ENCODE measurements at regions of chr6 and their contacts with region 1.

Region 1: GRCh38 chr6:73695619-73696421 is at the start of gene CD109:
- DNase-seq: peak; percentile 86
- ATAC-seq: peak; percentile 87
- H3K4me3 Mint-ChIP-seq: peak within 1 kb of the TSS; percentile 95
- H3K27ac Mint-ChIP-seq: peak within 1 kb of the TSS; percentile 98
- H3K4me1 Mint-ChIP-seq: peaks cover 41% of the 10 kb centered on the region
- H3K27me3 Mint-ChIP-seq: peaks cover 32% of the 10 kb centered on the region
- CTCF ChIP-seq: no peak
- total RNA-seq, gene CD109: 9.5 to 10.6 TPM

Region 2: DNA sequence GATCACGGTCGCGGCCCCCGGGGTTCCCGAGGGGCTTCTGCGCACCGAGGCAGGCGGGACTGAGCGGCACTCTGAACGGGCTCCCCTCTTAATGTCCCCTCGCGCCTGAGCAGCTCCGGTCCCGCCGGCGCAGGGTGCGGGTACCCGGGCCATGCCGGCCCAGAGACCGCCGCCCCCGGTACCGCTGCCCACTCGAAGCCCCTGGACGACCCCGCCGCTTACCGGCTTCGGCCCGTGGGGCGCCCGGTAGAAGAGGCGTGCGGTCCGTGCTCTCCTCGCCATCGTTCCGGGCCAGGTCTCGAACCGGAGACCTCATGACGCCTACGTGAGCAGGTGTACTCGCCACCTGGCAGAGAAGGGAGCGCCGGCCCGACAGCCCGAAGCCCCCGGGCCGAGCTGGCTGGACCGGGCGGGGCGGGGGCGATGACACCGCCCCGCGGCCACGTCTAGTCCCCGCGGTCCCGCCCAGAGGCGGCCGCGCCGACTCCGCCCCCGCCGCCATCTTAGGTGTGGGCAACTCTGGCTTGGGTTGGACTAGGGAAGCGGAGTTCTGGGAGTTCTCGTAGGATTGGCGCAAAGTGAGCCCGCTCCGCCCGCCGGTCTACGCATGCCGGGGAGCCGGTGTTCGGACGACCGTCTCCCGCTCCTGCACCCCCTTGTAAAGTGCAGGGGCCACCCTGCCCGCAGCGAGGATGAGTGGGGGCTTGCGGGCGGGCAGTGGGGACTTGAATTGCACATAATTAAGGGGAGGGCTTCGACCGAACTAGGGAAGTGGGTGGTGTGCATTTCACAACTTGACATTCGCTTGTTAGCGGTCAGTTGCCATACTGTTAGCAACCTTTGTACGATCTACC is 42.0 kb before region 1 on chr6 and contains the start of gene SLC17A5:
- CTCF ChIA-PET with region 1: interaction called, 4 read pairs
- POLR2A ChIA-PET with region 1: interaction called, 3 read pairs
- intact Hi-C with region 1: loop called (anchors 1 kb)
- DNase-seq: peak; percentile 92
- ATAC-seq: peak; percentile 89
- H3K4me3 Mint-ChIP-seq: peak within 1 kb of the TSS; percentile 87
- H3K27ac Mint-ChIP-seq: peak within 1 kb of the TSS; percentile 92
- H3K4me1 Mint-ChIP-seq: peaks cover 31% of the 10 kb centered on the region
- H3K27me3 Mint-ChIP-seq: no peaks in the 10 kb centered on the region
- CTCF ChIP-seq: no peak
- total RNA-seq, gene SLC17A5: 4.2 to 5.0 TPM

Region 3: DNA sequence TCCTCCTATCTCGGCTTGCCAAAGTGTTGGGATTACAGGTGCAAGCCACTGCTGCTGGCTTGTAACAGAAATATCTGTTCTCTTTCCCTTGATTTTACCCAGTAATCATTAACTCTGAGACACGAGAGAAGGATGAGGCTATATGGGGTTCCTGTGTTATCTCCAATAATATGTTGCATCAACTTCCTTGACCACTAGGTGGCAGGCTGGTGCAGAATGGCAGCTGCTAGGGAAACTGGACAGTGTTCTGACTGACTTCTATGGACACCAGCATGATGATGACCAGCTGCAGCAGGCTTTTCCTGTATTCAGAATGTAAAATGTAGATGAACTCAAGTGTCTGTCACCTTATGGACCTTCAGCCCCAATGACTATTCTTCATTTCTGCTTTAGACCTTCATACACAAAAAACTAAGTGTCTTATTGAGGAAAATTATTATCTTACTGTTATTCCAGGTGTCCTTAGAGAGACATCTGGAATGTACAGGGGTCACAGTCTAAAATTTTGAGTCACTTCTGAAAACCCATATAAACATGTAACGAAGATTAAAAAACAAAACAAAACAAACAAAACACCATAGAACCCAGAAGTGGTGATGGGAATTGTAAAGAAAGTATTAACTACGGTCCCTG is 20.2 kb before region 1 on chr6:
- CTCF ChIA-PET with region 1: interaction called, 10 read pairs
- POLR2A ChIA-PET with region 1: no interaction called
- intact Hi-C with region 1: no loop called
- DNase-seq: peak; percentile 84
- ATAC-seq: peak; percentile 94
- H3K4me3 Mint-ChIP-seq: no peak overlapping the region
- H3K27ac Mint-ChIP-seq: no peak overlapping the region
- H3K4me1 Mint-ChIP-seq: peaks cover 7% of the 10 kb centered on the region
- H3K27me3 Mint-ChIP-seq: peaks cover 22% of the 10 kb centered on the region
- CTCF ChIP-seq: peak; percentile 93

Region 4: GRCh38 chr6:73722318-73723060 is 26.7 kb after region 1 on chr6:
- CTCF ChIA-PET with region 1: no interaction called
- POLR2A ChIA-PET with region 1: interaction called, 5 read pairs
- intact Hi-C with region 1: loop called (anchors 1 kb)
- DNase-seq: peak; percentile 60
- ATAC-seq: peak; percentile 94
- H3K4me3 Mint-ChIP-seq: peak overlapping the region; percentile 2
- H3K27ac Mint-ChIP-seq: peak overlapping the region; percentile 62
- H3K4me1 Mint-ChIP-seq: peaks cover 29% of the 10 kb centered on the region
- H3K27me3 Mint-ChIP-seq: no peaks in the 10 kb centered on the region
- CTCF ChIP-seq: no peak

Region 5: GRCh38 chr6:73817253-73817652 is 121.4 kb after region 1 on chr6:
- CTCF ChIA-PET with region 1: no interaction called
- POLR2A ChIA-PET with region 1: no interaction called
- intact Hi-C with region 1: no loop called
- DNase-seq: no peak
- ATAC-seq: no peak
- H3K4me3 Mint-ChIP-seq: no peak overlapping the region
- H3K27ac Mint-ChIP-seq: no peak overlapping the region
- H3K4me1 Mint-ChIP-seq: no peaks in the 10 kb centered on the region
- H3K27me3 Mint-ChIP-seq: peaks cover 2% of the 10 kb centered on the region
- CTCF ChIP-seq: no peak

Region 6: DNA sequence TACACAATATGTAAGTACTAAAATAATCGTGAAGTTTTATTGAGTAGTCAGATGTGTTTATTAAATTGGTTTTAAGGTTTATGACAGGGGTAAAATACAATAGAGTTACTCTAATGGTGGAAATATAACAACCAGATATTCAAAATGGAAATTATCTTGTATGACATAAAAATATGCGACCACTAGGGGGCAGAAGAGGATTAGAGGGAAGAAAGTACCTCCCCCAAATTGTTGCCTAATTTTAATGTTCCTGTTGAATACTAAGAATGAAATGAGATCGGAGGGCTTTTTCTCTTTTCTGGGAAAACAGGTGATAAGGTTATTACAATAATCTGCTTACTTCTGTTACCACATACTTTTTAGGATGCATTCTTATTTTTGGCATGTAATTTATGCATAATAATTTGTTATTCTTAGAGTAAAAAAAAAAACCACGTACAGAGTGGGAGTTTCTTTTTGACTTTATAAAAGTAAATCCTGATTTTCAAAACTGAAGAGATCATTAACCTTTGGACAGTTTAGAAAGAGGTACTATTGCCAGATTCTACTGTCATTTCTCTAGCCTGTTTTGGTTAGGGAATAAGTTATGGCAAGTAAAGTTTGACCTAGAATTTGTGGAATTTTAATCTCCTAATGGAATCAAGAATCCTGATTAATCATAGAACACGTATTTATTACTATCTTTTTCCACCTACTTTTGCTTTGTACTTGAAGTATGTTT is 159.3 kb after region 1 on chr6:
- CTCF ChIA-PET with region 1: no interaction called
- POLR2A ChIA-PET with region 1: no interaction called
- intact Hi-C with region 1: no loop called
- DNase-seq: peak; percentile 4
- ATAC-seq: peak; percentile 34
- H3K4me3 Mint-ChIP-seq: no peak overlapping the region
- H3K27ac Mint-ChIP-seq: no peak overlapping the region
- H3K4me1 Mint-ChIP-seq: peaks cover 2% of the 10 kb centered on the region
- H3K27me3 Mint-ChIP-seq: no peaks in the 10 kb centered on the region
- CTCF ChIP-seq: peak; percentile 89

Region 7: GRCh38 chr6:74137911-74138310 is 442.1 kb after region 1 on chr6:
- CTCF ChIA-PET with region 1: no interaction called
- POLR2A ChIA-PET with region 1: no interaction called
- intact Hi-C with region 1: no loop called
- DNase-seq: no peak
- ATAC-seq: no peak
- H3K4me3 Mint-ChIP-seq: no peak overlapping the region
- H3K27ac Mint-ChIP-seq: no peak overlapping the region
- H3K4me1 Mint-ChIP-seq: no peaks in the 10 kb centered on the region
- H3K27me3 Mint-ChIP-seq: no peaks in the 10 kb centered on the region
- CTCF ChIP-seq: no peak

Measured in activated CD8-positive, alpha-beta T cell treated with anti-CD3 and anti-CD28 coated beads for 36 hours (primary cell).